ENCODE measurements at regions of chr1 and their contacts with region 1.

Region 1: GRCh38 chr1:179002552-179003345 is 22.9 kb upstream of the FAM20B start:
- DNase-seq: peak; percentile 60 to 87 (median 76)
- H3K4me3 ChIP-seq: peak overlapping the region in 1 of 4 donors; percentile 25
- H3K27ac ChIP-seq: no peak overlapping the region
- H3K4me1 ChIP-seq: no peaks in the 10 kb centered on the region
- H3K27me3 ChIP-seq: no peaks in the 10 kb centered on the region
- CTCF ChIP-seq: peak; percentile 91 to 99 (median 94)
- POLR2A ChIP-seq: no peak

Region 2: GRCh38 chr1:178532392-178532791 is 470.4 kb before region 1 on chr1:
- intact Hi-C with region 1: loop called in 1 of 2 experiments (anchors 5 kb)
- DNase-seq: peak; percentile 71 to 94 (median 84)
- H3K4me3 ChIP-seq: peak overlapping the region in 1 of 4 donors; percentile 19
- H3K27ac ChIP-seq: no peak overlapping the region
- H3K4me1 ChIP-seq: no peaks in the 10 kb centered on the region
- H3K27me3 ChIP-seq: no peaks in the 10 kb centered on the region
- CTCF ChIP-seq: peak; percentile 83 to 93 (median 90)
- POLR2A ChIP-seq: no peak

Region 3: GRCh38 chr1:178542560-178543356 is 460.0 kb before region 1 on chr1:
- intact Hi-C with region 1: loop called in 1 of 2 experiments (anchors 5 kb)
- DNase-seq: peak; percentile 83 to 95 (median 89)
- H3K4me3 ChIP-seq: peak overlapping the region; percentile 26 to 94 (median 74)
- H3K27ac ChIP-seq: peak overlapping the region in 4 of 5 donors; percentile 45 to 86 (median 81)
- H3K4me1 ChIP-seq: peaks cover 4 to 6% of the 10 kb centered on the region in 2 donors
- H3K27me3 ChIP-seq: no peaks in the 10 kb centered on the region
- CTCF ChIP-seq: peak; percentile 93 to 99 (median 98)
- POLR2A ChIP-seq: no peak

Region 4: DNA sequence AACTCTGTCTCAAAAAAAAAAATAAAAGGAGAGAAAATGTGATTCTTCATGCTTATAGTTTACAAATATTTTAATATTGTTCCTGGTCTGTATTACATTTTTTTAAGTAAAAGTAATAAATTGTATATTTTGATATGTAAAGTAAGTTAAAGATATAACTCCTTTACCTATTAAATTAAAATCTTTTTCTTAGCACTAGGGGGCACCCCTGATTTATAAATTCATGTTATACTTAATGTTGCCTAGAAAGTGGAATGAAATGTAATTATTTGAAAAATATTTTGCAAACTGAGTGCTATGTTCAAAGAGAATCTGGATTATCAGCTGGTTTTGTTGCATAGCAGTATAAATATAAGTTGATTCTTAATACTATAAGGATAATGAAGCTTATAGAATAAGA is 228.5 kb before region 1 on chr1:
- intact Hi-C with region 1: loop called (anchors 2 to 5 kb)
- DNase-seq: no peak
- H3K4me3 ChIP-seq: no peak overlapping the region
- H3K27ac ChIP-seq: no peak overlapping the region
- H3K4me1 ChIP-seq: no peaks in the 10 kb centered on the region
- H3K27me3 ChIP-seq: no peaks in the 10 kb centered on the region
- CTCF ChIP-seq: peak; percentile 15 to 62 (median 44)
- POLR2A ChIP-seq: no peak

Region 5: DNA sequence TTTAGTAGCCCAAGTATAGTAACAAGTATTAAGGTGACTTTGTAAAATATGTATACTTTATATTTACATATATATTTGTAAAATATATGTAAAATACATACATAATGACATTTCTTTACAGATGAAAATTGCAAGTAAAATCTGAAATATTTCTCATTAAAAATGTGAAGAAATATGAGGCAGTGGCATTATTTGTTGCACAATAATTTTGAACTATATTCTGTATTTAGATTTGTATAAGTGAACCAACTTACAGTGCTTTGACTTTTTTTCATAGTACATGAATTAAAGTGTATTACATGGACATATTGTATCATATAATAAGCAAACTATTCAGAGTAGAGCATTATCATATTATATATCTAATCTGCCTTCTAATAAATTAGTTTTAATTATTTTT is 192.2 kb before region 1 on chr1:
- intact Hi-C with region 1: loop called in 1 of 2 experiments (anchors 5 kb)
- DNase-seq: no peak
- H3K4me3 ChIP-seq: no peak overlapping the region
- H3K27ac ChIP-seq: no peak overlapping the region
- H3K4me1 ChIP-seq: peaks cover 0 to 4% of the 10 kb centered on the region in 2 donors
- H3K27me3 ChIP-seq: no peaks in the 10 kb centered on the region
- CTCF ChIP-seq: no peak
- POLR2A ChIP-seq: no peak

Region 6: GRCh38 chr1:178928985-178929384 is 73.8 kb before region 1 on chr1:
- intact Hi-C with region 1: no loop called
- DNase-seq: no peak
- H3K4me3 ChIP-seq: no peak overlapping the region
- H3K27ac ChIP-seq: no peak overlapping the region
- H3K4me1 ChIP-seq: peaks cover 0 to under 1% of the 10 kb centered on the region in 2 donors
- H3K27me3 ChIP-seq: no peaks in the 10 kb centered on the region
- CTCF ChIP-seq: no peak
- POLR2A ChIP-seq: no peak

Region 7: DNA sequence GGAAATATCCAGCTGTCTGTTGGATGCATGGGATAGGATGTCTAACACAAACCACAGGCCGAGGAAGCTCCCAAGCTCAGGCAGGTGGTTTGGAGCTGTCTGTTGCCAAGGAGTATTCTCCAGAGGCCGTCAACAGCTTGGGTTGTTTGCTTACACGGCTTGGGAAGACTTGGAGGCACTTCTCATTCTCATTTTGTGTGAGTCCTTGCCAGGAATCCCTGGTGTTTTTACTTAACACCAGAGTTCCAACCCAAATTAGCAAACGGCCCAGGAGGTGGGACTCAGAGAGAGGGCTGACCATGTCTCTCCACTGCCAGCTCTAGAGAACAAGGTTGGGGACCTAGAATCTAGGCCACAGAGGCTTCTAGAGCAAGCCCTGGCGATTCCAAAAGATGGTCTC is 49.7 kb before region 1 on chr1:
- intact Hi-C with region 1: no loop called
- DNase-seq: no peak
- H3K4me3 ChIP-seq: no peak overlapping the region
- H3K27ac ChIP-seq: peak overlapping the region in 1 of 5 donors; percentile 47
- H3K4me1 ChIP-seq: no peaks in the 10 kb centered on the region
- H3K27me3 ChIP-seq: no peaks in the 10 kb centered on the region
- CTCF ChIP-seq: no peak
- POLR2A ChIP-seq: no peak

Measured in adrenal gland (tissue), 19 donors.